OCI-LY7 (cell line): ENCODE measurements at regions of chr5 and their contacts with region 1.

Region 1: DNA sequence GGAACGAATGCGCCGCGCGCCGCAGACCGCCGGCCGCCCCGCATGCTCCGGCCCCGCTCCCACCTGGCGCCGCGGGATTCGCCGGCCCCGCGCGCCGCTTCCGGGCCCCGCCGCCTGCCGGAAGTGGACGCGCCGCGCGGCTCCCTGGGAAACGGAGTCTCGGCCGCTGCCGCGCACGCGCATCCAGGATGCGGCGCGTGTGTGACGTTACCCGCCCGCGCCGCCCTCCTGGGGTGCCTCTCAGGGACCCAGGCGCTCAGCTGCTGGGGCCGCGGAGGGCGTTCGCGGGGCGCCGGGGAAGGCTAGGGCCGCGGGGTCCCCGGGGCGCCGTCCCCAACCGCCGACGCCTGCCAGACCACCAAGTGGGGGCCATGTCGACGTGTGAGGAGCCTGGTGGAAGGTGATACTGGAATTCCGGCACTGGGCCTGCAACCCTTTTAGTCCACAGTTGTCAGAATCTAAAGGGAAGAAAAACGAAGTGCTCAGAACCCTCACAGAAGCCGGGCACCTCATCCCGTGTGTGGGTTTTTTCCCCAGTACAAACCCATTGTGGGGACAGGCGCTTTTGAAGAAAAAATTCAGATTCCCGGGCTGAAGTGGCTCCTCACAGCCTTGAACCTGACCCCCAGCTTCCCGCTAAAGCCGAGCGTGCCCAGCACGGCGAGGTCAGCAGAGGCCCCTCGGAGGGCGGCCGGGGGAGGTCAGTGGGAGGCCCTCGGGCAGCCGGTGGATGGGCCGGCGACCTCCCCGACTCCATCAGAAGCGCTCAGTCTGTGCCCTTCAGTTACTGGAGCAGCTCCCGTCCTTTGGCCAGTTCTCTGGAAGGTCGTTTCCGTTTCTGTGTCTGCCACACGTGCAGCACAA is at the start of gene CLPTM1L:
- DNase-seq: peak; percentile 94
- H3K4me3 ChIP-seq: peak within 1 kb of the TSS; percentile 89
- H3K27ac ChIP-seq: peak within 1 kb of the TSS; percentile 94
- H3K4me1 ChIP-seq: peaks cover 63% of the 10 kb centered on the region
- CTCF ChIP-seq: no peak
- total RNA-seq, gene CLPTM1L: 356 and 395 TPM in 2 replicates

Region 2: GRCh38 chr5:217860-218456 is 1127.2 kb before region 1 on chr5 and contains the starts of genes CCDC127 and SDHA:
- CTCF ChIA-PET with region 1: no interaction called
- POLR2A ChIA-PET with region 1: no interaction called
- intact Hi-C with region 1: loop called (anchors 5 kb)
- DNase-seq: peak; percentile 96
- H3K4me3 ChIP-seq: peak within 1 kb of the TSS; percentile 94
- H3K27ac ChIP-seq: peak within 1 kb of the TSS; percentile 66
- H3K4me1 ChIP-seq: peaks cover 48% of the 10 kb centered on the region
- CTCF ChIP-seq: peak; percentile 77
- total RNA-seq, gene CCDC127: 6.0 and 10.8 TPM in 2 replicates
- total RNA-seq, gene SDHA: 147 and 151 TPM in 2 replicates

Region 3: GRCh38 chr5:1041225-1042129 is 303.7 kb before region 1 on chr5:
- CTCF ChIA-PET with region 1: no interaction called
- POLR2A ChIA-PET with region 1: no interaction called
- intact Hi-C with region 1: no loop called
- DNase-seq: no peak
- H3K4me3 ChIP-seq: no peak overlapping the region
- H3K27ac ChIP-seq: no peak overlapping the region
- H3K4me1 ChIP-seq: no peaks in the 10 kb centered on the region
- CTCF ChIP-seq: no peak

Region 4: GRCh38 chr5:1294835-1295649 is 50.2 kb before region 1 on chr5 and contains the start of gene TERT:
- CTCF ChIA-PET with region 1: interaction called, 4 read pairs
- POLR2A ChIA-PET with region 1: interaction called, 4 read pairs
- intact Hi-C with region 1: loop called (anchors 1 kb)
- DNase-seq: peak; percentile 91
- H3K4me3 ChIP-seq: peak within 1 kb of the TSS; percentile 79
- H3K27ac ChIP-seq: peak within 1 kb of the TSS; percentile 87
- H3K4me1 ChIP-seq: peaks cover 72% of the 10 kb centered on the region
- CTCF ChIP-seq: no peak
- total RNA-seq, gene TERT: 120 and 156 TPM in 2 replicates

Region 5: DNA sequence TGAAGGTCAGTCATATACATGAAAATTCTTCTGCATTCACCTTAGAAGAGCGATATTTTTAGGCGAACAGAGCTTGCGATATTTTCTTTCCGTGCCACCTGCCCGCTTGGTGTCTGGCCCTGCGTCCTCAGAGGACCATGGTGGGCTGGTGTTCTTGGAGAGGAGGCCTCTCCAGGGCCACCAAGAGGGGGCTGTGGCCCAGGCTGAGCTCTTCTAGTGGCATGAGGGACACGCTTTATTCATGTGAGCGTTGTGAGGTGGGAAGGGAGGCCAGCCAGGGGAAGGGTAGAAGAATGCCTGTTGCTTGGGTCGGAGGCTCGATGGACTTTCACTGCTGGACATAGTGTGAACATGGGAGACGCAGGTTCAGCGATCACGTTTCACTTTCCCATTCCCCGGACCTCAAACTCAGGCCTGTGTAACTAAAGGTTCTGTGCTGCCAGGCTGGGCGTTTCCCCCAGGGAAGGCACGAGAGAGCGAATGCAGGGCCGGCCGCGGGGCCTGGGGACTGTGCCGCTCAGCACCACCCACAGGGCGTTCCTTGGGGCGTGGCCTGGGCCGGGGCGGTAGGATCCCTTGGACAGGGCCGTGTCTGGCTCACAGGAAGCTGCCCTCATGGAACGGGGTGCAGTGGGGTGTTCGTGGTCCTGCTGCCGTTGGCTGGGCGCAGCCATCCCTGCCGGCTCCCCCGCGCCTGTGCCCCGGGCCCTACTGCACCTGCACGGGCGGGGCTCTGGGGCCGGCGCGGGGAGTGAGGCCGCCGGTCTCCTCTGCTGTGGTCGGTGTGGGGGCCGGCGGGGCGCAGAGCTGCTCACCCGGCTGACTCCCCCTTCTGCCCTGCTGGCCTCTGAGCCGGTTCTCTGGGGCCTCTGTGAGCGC is 40.4 kb after region 1 on chr5:
- CTCF ChIA-PET with region 1: no interaction called
- POLR2A ChIA-PET with region 1: interaction called, 11 read pairs
- intact Hi-C with region 1: no loop called
- DNase-seq: peak; percentile 81
- H3K4me3 ChIP-seq: peak overlapping the region; percentile 67
- H3K27ac ChIP-seq: peak overlapping the region; percentile 43
- H3K4me1 ChIP-seq: peaks cover 20% of the 10 kb centered on the region
- CTCF ChIP-seq: no peak

Region 6: GRCh38 chr5:1445313-1445894 is 100.2 kb after region 1 on chr5 and contains the start of gene SLC6A3:
- CTCF ChIA-PET with region 1: no interaction called
- POLR2A ChIA-PET with region 1: no interaction called
- intact Hi-C with region 1: no loop called
- DNase-seq: no peak
- H3K4me3 ChIP-seq: no peak within 1 kb of the TSS
- H3K27ac ChIP-seq: no peak within 1 kb of the TSS
- H3K4me1 ChIP-seq: no peaks in the 10 kb centered on the region
- CTCF ChIP-seq: no peak
- total RNA-seq, gene SLC6A3: 0.05 TPM in 1 of 2 replicates, not detected in the other